ENCODE measurements at regions of chr1 and their contacts with region 1.

Region 1: DNA sequence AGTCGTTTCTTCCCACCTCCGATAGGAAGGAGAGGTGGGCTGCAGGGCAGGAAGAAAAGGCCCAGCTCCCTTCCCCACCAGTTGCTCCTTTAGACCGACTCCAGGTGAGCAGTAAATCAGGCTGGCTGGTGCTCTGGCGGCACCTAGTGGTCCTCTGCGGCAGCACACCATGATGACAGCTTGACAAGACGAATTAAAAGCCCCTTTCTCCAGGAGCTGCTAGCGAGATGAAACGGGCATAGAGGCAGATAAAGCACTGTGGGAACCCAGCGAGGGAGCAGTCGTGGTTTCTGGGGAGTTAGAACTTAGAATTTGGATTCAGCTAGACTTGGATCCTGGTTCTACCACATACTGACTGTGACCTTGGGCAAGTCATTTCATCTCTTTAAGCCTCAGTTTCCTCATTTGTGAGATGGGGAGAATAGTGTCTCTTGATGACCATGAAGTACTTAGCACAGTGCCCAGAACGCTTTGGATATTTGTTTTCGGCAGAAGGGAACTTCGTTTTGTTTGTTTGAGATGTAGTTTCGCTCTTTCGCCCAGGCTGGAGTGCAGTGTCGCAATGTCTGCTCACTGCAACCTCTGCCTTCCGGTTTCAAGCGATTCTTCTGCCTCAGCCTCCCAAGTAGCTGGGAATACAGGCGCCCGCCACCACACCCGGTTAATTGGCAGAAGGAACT is 21.8 kb upstream of the COL9A2 start:
- DNase-seq: peak; percentile 94
- H3K4me3 Mint-ChIP-seq: no peak overlapping the region
- H3K27ac Mint-ChIP-seq: no peak overlapping the region
- H3K4me1 Mint-ChIP-seq: peaks cover 48% of the 10 kb centered on the region
- H3K27me3 Mint-ChIP-seq: peaks cover 4% of the 10 kb centered on the region

Region 2: DNA sequence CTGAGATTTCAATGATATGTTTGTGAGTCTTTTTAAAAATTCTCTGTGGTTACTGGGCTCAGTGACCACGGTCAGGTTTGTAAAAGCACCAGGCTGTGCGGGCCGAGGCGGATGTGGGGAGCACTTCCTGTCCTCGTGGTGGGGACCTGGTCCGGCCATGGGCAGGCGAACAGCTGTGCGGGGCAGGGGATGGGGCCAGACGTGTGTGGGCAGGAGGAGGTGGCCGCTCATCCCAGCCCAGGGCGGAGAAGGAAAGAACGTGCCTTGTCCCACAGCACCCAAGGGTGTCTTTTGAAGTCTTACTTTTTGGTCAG is 562.5 kb before region 1 on chr1:
- CTCF ChIA-PET with region 1: no interaction called
- DNase-seq: no peak
- H3K4me3 Mint-ChIP-seq: no peak overlapping the region
- H3K27ac Mint-ChIP-seq: no peak overlapping the region
- H3K4me1 Mint-ChIP-seq: no peaks in the 10 kb centered on the region
- H3K27me3 Mint-ChIP-seq: peaks cover 17% of the 10 kb centered on the region

Region 3: GRCh38 chr1:40078512-40079333 is 260.2 kb before region 1 on chr1:
- CTCF ChIA-PET with region 1: interaction called, 99 read pairs
- DNase-seq: peak; percentile 65
- H3K4me3 Mint-ChIP-seq: no peak overlapping the region
- H3K27ac Mint-ChIP-seq: no peak overlapping the region
- H3K4me1 Mint-ChIP-seq: no peaks in the 10 kb centered on the region
- H3K27me3 Mint-ChIP-seq: no peaks in the 10 kb centered on the region

Region 4: DNA sequence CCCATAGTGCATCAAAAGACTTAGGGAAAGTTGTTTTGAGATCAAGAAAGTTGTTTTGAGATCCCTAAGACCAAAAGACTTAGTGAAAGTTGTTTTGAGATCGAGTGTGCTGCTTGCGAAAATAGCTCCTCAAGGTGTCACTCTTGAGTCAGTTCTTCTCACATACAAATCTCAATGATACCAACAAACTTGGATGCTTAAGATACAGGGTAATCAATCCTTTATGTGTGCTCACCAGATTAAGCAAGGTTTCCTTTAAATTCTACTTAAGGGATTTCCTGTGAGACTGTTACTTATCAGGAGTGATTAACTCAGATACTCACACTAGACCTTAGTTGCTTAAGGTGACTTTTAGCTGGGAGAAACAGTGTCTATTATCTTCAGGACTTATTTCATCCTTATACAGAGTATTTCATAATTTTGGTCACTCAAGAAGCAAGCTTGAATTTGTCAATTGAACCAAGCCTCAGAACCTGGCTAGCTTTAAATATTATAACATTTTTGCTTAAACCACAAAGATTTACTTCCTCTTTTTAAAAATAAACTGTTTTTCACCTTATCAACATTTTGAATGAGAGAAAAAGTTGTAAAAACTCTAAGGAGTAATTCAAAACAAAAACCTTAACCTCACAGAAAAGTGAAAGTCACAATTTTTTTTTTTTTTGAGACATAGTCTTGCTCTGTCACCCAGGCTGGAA is 185.7 kb before region 1 on chr1:
- CTCF ChIA-PET with region 1: interaction called, 215 read pairs
- DNase-seq: peak; percentile 48
- H3K4me3 Mint-ChIP-seq: no peak overlapping the region
- H3K27ac Mint-ChIP-seq: no peak overlapping the region
- H3K4me1 Mint-ChIP-seq: peaks cover 7% of the 10 kb centered on the region
- H3K27me3 Mint-ChIP-seq: peaks cover under 1% of the 10 kb centered on the region

Region 5: GRCh38 chr1:40273547-40274166 is 65.2 kb before region 1 on chr1:
- CTCF ChIA-PET with region 1: no interaction called
- DNase-seq: no peak
- H3K4me3 Mint-ChIP-seq: no peak overlapping the region
- H3K27ac Mint-ChIP-seq: no peak overlapping the region
- H3K4me1 Mint-ChIP-seq: no peaks in the 10 kb centered on the region
- H3K27me3 Mint-ChIP-seq: no peaks in the 10 kb centered on the region

Region 6: GRCh38 chr1:40352126-40352525 is 13.2 kb after region 1 on chr1:
- CTCF ChIA-PET with region 1: interaction called, 21 read pairs
- DNase-seq: no peak
- H3K4me3 Mint-ChIP-seq: no peak overlapping the region
- H3K27ac Mint-ChIP-seq: no peak overlapping the region
- H3K4me1 Mint-ChIP-seq: no peaks in the 10 kb centered on the region
- H3K27me3 Mint-ChIP-seq: no peaks in the 10 kb centered on the region

Region 7: GRCh38 chr1:40373338-40374283 is 34.7 kb after region 1 on chr1 and contains the start of gene SMAP2:
- CTCF ChIA-PET with region 1: interaction called, 11 read pairs
- DNase-seq: peak; percentile 96
- H3K4me3 Mint-ChIP-seq: peak within 1 kb of the TSS; percentile 95
- H3K27ac Mint-ChIP-seq: peak within 1 kb of the TSS; percentile 98
- H3K4me1 Mint-ChIP-seq: peaks cover 46% of the 10 kb centered on the region
- H3K27me3 Mint-ChIP-seq: peaks cover 5% of the 10 kb centered on the region